Left colon (tissue), 2 donors: ENCODE measurements at regions of chr19 and their contacts with region 1.

Region 1: GRCh38 chr19:42132851-42133528 is 744 bp upstream of the POU2F2 start:
- DNase-seq: peak; percentile 49 to 78
- ATAC-seq: peak; percentile 92

Region 2: DNA sequence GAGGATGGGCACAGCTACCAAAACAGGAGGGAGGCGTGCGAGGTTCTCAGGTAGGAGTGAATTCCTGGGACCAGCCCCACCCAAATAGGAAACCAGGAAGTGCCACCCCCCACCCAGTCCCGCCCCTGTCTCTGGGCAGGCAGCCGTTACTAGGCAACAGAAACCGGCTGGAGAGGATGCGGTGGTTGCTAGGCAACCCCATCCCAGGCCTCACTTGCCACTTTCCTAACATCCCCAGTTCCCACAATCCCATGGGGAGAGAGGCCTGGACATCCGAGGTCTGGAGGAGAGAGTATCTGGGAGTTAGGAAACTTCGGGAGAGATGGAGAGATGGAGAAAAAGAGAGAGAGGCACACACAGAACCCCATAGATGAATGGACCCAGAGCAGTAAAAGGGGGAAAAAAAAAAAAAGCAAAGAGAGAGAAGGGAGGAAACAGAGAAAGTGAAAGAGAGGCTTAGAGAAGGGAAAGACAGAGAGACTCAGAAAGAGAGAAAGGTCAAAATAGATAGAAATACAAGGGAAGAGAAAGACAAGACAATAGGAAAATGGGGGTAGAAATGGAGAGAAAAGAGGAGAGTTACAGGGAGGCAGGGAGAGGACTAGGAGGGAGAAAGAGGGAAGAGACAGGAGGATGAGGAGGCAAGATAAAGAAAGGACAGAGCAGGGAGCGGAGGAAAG is 66.8 kb before region 1 on chr19:
- intact Hi-C with region 1: no loop called
- DNase-seq: no peak
- ATAC-seq: no peak

Region 3: GRCh38 chr19:42184401-42184861 is 51.4 kb after region 1 on chr19:
- intact Hi-C with region 1: loop called (anchors 5 to 10 kb)
- DNase-seq: peak; percentile 72 to 80
- ATAC-seq: peak; percentile 81